ENCODE measurements at regions of chr7 and their contacts with region 1.

Region 1: GRCh38 chr7:48299580-48300169 is 128.4 kb downstream of the ABCA13 start:
- DNase-seq: no peak
- H3K4me3 ChIP-seq: no peak overlapping the region
- H3K27ac ChIP-seq: no peak overlapping the region
- H3K4me1 ChIP-seq: no peaks in the 10 kb centered on the region
- H3K27me3 ChIP-seq: no peaks in the 10 kb centered on the region
- CTCF ChIP-seq: peak in 9 of 11 experiments; percentile 25 to 63 (median 50)
- POLR2A ChIP-seq: no peak

Region 2: DNA sequence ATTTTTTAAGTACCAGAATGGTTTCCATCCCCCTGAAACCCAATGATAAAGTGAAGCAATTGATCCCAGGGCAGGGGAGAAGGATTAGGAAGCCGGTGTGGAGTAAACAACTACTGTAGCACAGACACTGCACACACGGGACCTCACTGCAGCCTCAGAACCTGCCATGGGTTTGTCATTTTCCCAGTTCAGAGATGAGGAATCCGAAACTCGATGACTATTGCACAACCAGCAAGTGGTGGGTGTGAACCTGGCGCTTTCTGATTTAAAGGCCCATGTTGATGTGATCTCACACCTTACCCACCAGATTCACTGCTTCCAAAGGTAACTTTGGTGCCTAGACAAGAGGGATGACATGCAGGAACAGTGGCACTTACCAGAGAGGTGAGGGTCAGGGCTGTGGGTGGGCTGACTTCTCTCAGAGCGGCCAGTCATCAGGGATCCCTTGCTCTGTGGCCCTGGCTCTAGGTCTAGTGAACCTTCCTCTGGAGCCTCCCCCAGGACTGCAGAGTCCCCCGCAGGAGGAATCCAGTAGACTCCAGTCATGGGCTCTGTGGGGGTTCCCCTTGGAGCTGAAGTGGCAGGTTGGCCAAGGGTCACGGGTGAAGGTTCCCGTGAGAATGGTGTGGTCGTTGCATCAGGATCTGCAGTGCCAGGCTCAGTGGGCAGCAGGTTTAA is 414.2 kb before region 1 on chr7:
- intact Hi-C with region 1: no loop called
- DNase-seq: no peak
- H3K4me3 ChIP-seq: no peak overlapping the region
- H3K27ac ChIP-seq: no peak overlapping the region
- H3K4me1 ChIP-seq: peaks cover 0 to 6% (median 0%) of the 10 kb centered on the region in 6 donors
- H3K27me3 ChIP-seq: no peaks in the 10 kb centered on the region
- CTCF ChIP-seq: no peak
- POLR2A ChIP-seq: no peak

Region 3: DNA sequence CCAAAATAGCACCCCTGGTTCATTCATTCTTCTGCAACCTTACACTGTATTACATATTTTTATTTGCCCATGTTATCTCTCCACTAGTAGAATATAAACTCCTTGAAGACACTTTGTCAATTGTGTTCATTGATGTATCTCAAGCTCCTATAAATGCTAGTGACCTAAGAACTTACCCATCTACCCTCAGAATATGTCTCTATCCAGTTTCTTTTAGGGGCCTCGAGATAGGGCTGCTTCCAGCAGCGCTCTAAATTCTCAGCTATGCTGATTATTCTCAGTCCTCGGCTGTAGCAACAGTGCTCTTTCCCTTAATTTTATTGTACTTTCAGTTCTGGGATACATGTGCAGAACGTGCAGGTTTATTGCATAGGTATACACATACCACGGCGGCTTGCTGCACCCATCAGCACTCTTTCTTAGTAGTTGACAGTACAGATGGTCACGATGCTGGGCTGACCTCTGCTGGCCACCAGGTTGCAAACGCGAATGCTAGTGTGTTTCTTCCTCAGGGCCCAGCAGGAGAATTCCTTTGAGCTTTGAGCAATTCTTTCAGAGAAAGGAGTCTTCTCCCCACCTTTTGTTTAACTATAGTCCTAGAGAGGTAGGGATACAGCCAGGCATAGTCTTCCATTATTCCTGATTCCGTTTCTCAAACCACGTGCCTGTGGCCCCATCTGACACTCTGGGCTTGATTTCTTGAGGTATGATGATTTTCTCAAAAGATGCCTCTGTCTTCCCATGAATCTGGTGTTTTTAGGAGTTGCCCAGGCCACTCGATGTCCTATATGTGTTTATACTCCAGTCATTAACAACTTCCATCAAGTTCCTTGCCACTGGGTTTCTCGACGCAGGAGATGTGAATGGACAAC is 575.6 kb after region 1 on chr7:
- intact Hi-C with region 1: loop called (anchors 10 kb)
- DNase-seq: no peak
- H3K4me3 ChIP-seq: no peak overlapping the region
- H3K27ac ChIP-seq: no peak overlapping the region
- H3K4me1 ChIP-seq: no peaks in the 10 kb centered on the region
- H3K27me3 ChIP-seq: no peaks in the 10 kb centered on the region
- CTCF ChIP-seq: peak in 7 of 11 experiments; percentile 11 to 53 (median 32)
- POLR2A ChIP-seq: no peak

Measured in spleen (tissue), 13 donors.